ENCODE measurements at regions of chr3 and their contacts with region 1.

Region 1: GRCh38 chr3:149657926-149658733 is at the start of gene WWTR1:
- DNase-seq: peak; percentile 92
- H3K4me3 ChIP-seq: peak within 1 kb of the TSS; percentile 94
- H3K27ac ChIP-seq: peak within 1 kb of the TSS; percentile 98
- H3K27me3 ChIP-seq: no peaks in the 10 kb centered on the region
- CTCF ChIP-seq: no peak
- polyA plus RNA-seq, gene WWTR1: 161 and 164 TPM in 2 replicates

Region 2: DNA sequence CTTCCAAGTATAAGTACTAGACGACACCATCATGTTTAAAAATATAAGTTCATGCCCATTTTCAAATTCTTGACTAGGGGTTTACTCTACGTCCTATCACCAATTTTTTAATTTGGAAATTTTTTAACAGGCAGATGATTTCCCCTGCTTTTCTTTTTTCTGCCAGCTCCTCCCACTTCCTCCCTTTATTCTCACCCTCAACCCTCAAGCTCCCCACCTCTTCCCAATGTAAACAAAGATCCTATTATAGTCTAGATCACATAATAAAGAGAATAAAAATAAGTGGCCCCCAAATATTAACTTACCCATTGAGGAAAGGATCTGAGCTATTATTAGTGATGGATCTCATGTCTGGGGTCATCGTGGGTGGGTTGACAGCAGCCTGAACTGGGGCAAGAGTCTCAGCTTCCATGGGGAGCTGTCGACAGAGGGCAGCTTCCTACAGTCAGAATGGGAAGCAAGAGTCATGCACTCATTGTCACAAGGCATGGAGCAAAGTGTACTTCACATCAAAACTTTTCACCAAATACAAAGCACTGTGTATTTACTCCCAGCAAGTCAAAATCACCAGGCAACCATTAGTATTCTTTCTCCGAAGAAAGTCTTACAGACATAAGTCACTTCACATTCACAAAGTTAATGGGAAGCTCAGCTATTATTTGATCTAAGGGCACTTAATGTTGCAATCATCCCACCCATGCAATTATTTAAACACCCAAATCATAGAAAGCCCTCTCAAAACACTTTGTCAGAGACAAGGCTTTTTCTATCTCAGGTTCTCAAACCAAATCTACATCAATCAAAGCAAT is 130.4 kb before region 1 on chr3:
- CTCF ChIA-PET with region 1: interaction called, 11 read pairs
- POLR2A ChIA-PET with region 1: interaction called, 3 read pairs
- DNase-seq: no peak
- H3K4me3 ChIP-seq: no peak overlapping the region
- H3K27ac ChIP-seq: peak overlapping the region; percentile 41
- H3K27me3 ChIP-seq: no peaks in the 10 kb centered on the region
- CTCF ChIP-seq: peak; percentile 25; the same call in 1 of the 2 replicates

Region 3: DNA sequence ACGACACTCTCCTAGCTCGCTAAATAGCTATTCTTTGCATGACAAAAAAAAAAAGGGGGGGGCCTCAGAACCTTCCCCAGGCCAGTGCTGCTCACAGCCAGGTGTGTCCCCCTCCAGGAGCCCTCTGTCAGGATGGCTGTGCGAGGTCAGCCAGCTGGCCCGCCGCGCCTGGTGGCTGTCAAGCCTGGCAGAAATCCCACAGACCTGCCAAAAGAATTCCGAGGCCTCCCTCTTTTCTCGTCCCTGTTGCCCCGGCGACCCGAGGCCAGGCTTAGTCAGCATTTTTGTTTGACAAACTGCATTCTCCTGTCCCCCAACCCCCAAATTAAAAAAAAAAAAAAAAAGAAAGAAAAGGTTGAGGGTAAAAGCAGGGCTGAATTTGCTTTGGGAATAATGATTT is 121.7 kb before region 1 on chr3:
- CTCF ChIA-PET with region 1: interaction called, 9 read pairs
- POLR2A ChIA-PET with region 1: interaction called, 10 read pairs
- DNase-seq: no peak
- H3K4me3 ChIP-seq: no peak overlapping the region
- H3K27ac ChIP-seq: no peak overlapping the region
- H3K27me3 ChIP-seq: no peaks in the 10 kb centered on the region
- CTCF ChIP-seq: no peak

Region 4: DNA sequence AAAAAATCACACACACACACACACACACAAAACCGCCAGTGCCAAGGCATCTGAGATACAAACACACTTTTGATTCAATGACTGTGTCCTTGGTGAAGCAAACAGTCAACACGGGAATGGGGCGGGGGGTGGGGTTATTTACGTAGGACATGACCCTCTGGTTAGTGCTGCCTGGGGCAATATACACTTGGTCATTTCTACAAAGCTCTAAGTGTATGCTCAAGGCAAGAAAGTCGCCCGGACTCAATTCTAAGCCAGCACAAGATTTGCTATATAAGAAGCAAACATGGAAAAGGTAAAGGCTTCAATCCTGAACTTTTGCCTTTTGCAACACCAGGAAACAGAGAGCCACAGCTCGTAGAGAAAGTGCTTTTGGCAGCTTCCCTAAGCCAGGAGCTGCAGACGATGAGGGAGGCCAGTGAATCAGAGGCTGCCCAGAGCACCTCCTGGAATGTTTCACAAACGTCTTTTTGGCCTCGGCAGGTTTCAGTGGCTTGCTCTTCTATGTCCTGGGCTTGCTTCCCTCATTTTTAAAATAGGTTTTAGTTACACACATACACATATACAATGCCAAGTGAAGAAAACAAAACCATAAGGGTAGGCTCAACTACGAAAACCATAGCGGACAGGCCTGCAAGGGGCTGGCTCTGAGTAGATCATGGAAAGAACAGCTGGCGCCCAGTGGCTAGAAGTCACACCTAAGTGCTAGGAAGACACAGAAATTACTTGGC is 110.0 kb before region 1 on chr3:
- CTCF ChIA-PET with region 1: no interaction called
- POLR2A ChIA-PET with region 1: interaction called, 15 read pairs
- DNase-seq: peak; percentile 77
- H3K4me3 ChIP-seq: peak overlapping the region; percentile 23
- H3K27ac ChIP-seq: peak overlapping the region; percentile 89
- H3K27me3 ChIP-seq: no peaks in the 10 kb centered on the region
- CTCF ChIP-seq: no peak

Region 5: GRCh38 chr3:149575961-149576564 is 82.1 kb before region 1 on chr3:
- CTCF ChIA-PET with region 1: interaction called, 5 read pairs
- POLR2A ChIA-PET with region 1: interaction called, 15 read pairs
- DNase-seq: peak; percentile 90
- H3K4me3 ChIP-seq: peak overlapping the region; percentile 34
- H3K27ac ChIP-seq: peak overlapping the region; percentile 99
- H3K27me3 ChIP-seq: no peaks in the 10 kb centered on the region
- CTCF ChIP-seq: no peak

Region 6: GRCh38 chr3:149638228-149639092 is 19.7 kb before region 1 on chr3:
- CTCF ChIA-PET with region 1: interaction called, 5 read pairs
- POLR2A ChIA-PET with region 1: interaction called, 16 read pairs
- DNase-seq: peak; percentile 66
- H3K4me3 ChIP-seq: peak overlapping the region; percentile 51
- H3K27ac ChIP-seq: peak overlapping the region; percentile 68
- H3K27me3 ChIP-seq: no peaks in the 10 kb centered on the region
- CTCF ChIP-seq: no peak

Region 7: DNA sequence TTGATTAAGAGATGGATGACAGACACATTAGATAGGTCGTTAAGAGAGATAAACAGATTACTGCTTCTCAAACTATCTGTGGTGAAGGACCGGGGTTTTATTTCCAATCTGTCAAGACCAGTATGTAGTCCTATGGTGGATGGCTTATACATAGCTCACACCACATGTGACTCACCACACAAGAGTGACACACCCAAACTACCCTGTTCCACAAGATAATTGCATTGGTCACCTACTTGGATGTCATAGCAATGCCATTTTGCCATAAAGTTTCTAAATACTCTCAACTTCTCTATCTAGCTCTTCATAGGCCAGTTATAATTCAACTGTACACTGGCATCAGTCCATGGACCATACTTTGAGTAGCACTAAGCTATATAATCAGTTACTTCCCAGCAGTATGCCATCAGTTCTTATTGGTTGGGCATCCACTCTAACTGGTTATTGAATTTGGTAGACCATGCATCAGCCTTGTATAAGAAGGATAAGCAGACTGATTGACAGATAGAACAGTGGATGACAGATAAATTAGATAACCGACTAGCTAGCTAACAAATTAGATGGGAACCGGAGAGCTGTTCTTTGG is 11.9 kb before region 1 on chr3:
- CTCF ChIA-PET with region 1: no interaction called
- POLR2A ChIA-PET with region 1: interaction called, 15 read pairs
- DNase-seq: no peak
- H3K4me3 ChIP-seq: no peak overlapping the region
- H3K27ac ChIP-seq: no peak overlapping the region
- H3K27me3 ChIP-seq: no peaks in the 10 kb centered on the region
- CTCF ChIP-seq: no peak

Region 8: GRCh38 chr3:149796026-149796425 is 137.9 kb after region 1 on chr3:
- CTCF ChIA-PET with region 1: no interaction called
- POLR2A ChIA-PET with region 1: no interaction called
- DNase-seq: no peak
- H3K4me3 ChIP-seq: no peak overlapping the region
- H3K27ac ChIP-seq: no peak overlapping the region
- H3K27me3 ChIP-seq: no peaks in the 10 kb centered on the region
- CTCF ChIP-seq: no peak

Measured in AG04450 (cell line).